ENCODE measurements at regions of chr4 and their contacts with region 1.

Region 1: DNA sequence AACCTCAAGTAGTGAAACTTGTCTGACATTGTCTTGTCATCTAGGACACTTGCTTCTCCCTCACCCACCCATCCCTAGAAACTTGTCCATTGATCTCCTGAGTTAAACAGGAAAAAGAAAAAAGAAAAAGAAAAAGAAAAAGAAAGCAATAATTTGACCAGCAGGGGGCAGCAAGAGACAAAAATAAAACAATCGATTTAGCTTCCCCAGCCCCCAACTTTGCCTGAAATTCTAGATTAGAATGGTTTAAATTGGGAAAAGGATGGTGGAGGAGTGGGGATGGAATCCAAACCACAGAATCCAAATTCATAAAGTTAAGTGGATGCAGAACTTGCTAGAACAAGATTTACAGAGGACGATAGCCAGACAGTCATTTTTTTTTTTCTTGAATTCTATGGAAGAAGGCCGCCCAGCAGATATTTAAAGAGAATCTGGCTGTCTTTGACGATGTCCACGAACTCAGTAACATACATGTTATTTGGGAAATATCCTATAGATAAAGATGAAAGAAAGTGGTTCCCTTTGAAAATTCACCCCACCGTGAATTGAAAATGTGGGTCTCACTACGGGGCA is 282.9 kb downstream of the USP46 start:
- DNase-seq: no peak
- ATAC-seq: peak; percentile 24; the same call in 1 of the 3 replicates
- H3K4me3 ChIP-seq: no peak overlapping the region
- H3K27ac ChIP-seq: no peak overlapping the region
- H3K4me1 ChIP-seq: no peaks in the 10 kb centered on the region
- H3K27me3 ChIP-seq: no peaks in the 10 kb centered on the region
- CTCF ChIP-seq: peak; percentile 20 to 53 (median 41); a peak in 4 of 6 replicates
- EP300 ChIP-seq: no peak
- POLR2A ChIP-seq: no peak
- RAD21 ChIP-seq: peak; percentile 68

Region 2: DNA sequence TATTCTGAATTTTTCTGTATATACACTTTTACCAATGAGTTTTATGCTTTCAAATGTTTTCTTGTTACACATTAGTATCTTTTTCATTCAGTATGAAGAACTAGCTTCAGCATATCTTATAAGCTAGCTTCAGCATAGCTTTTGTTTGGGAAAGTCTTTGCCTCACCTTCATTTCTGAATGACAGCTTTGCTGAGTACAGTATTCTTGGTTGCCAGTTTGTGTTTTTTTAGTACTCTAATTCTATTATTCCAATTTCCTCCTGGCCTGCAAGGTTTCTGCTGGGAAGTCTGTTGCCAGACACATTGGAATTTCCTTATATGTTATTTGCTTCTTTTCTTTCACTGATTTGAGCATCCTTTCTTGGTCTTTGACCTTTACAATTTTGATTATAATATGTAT is 46.3 kb before region 1 on chr4:
- CTCF ChIA-PET with region 1: no interaction called
- POLR2A ChIA-PET with region 1: no interaction called
- RAD21 ChIA-PET with region 1: no interaction called
- SMC1A ChIA-PET with region 1: no interaction called
- in situ Hi-C with region 1: no loop called
- intact Hi-C with region 1: no loop called
- DNase-seq: no peak
- ATAC-seq: no peak
- H3K4me3 ChIP-seq: no peak overlapping the region
- H3K27ac ChIP-seq: no peak overlapping the region
- H3K4me1 ChIP-seq: no peaks in the 10 kb centered on the region
- H3K27me3 ChIP-seq: no peaks in the 10 kb centered on the region
- CTCF ChIP-seq: no peak
- EP300 ChIP-seq: no peak
- POLR2A ChIP-seq: no peak
- RAD21 ChIP-seq: no peak

Region 3: DNA sequence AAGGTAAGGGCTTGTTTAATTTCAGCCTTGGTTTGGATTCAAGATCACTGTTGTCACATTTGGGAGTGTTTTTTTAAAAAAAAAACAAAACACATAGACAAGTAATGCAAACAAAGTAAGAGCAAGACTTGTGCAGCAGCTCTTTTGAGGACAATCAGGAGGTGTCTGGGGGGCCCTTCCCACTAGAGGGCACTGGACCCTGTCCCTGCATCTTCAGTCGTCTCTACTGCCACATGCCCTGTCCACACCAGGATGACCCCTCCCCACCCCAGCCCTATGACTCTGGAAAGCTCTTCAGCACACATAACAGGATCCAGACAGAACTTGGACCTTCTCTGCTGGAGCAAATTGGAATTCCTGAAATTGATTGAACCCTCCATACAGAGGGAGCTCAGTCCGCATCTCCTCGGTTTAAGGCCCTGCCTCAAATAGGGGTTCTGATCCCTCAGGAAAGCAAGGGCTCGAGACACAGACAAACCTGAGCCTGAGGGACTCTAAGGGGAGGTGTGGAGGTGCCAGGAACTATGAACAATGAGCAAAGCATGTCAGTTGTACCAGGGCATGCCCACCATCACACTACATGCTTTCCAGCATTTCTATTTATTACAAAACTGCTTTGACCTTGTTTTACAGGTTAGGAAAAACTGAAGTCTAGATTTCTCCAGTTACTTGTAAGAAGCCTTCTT is 212.0 kb after region 1 on chr4:
- CTCF ChIA-PET with region 1: interaction called, 4 read pairs
- POLR2A ChIA-PET with region 1: no interaction called
- RAD21 ChIA-PET with region 1: interaction called, 3 read pairs
- SMC1A ChIA-PET with region 1: no interaction called
- in situ Hi-C with region 1: no loop called
- intact Hi-C with region 1: loop called (anchors 10 kb)
- DNase-seq: no peak
- ATAC-seq: peak; percentile 92
- H3K4me3 ChIP-seq: no peak overlapping the region
- H3K27ac ChIP-seq: no peak overlapping the region
- H3K4me1 ChIP-seq: no peaks in the 10 kb centered on the region
- H3K27me3 ChIP-seq: no peaks in the 10 kb centered on the region
- CTCF ChIP-seq: peak; percentile 54 to 69 (median 56)
- EP300 ChIP-seq: no peak
- POLR2A ChIP-seq: no peak
- RAD21 ChIP-seq: peak; percentile 68

Region 4: GRCh38 chr4:52665592-52665991 is 289.4 kb after region 1 on chr4:
- CTCF ChIA-PET with region 1: interaction called, 17 read pairs
- POLR2A ChIA-PET with region 1: no interaction called
- RAD21 ChIA-PET with region 1: interaction called, 12 read pairs
- SMC1A ChIA-PET with region 1: interaction called, 5 read pairs
- in situ Hi-C with region 1: loop called (anchors 5 kb)
- intact Hi-C with region 1: loop called (anchors 1 kb)
- DNase-seq: no peak
- ATAC-seq: peak; percentile 94
- H3K4me3 ChIP-seq: no peak overlapping the region
- H3K27ac ChIP-seq: no peak overlapping the region
- H3K4me1 ChIP-seq: 0 out of 2 replicates have a peak, but pooled peaks cover 2% of the 10 kb centered on the region
- H3K27me3 ChIP-seq: no peaks in the 10 kb centered on the region
- CTCF ChIP-seq: peak; percentile 50 to 76 (median 52); a peak in 5 of 6 replicates
- EP300 ChIP-seq: no peak
- POLR2A ChIP-seq: no peak
- RAD21 ChIP-seq: peak; percentile 87

Region 5: DNA sequence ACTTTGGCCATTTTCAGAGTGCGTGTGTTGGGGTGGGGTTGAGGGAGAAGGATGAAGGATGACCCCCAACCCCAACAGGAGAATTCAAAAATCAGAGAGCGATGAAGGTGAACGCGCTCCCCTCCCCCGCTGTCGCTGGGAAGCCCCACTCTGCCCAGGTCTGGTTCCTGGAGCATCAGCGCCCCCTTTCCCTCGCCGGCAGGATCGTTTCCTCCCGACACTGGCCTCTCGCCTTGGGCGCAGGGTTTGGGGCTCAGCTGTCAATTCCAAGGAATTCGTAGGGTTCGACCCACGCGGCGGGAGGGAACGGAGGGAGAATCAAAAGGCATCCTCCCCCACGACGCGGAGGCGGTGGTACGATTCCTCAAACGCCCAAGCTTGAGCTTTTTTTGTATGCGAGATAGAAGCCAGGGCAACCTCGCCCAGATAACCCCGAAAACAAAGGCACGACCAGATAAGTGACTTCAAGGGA is 1851.9 kb after region 1 on chr4:
- CTCF ChIA-PET with region 1: no interaction called
- POLR2A ChIA-PET with region 1: no interaction called
- RAD21 ChIA-PET with region 1: interaction called, 10 read pairs
- SMC1A ChIA-PET with region 1: interaction called, 3 read pairs
- in situ Hi-C with region 1: loop called (anchors 5 kb)
- intact Hi-C with region 1: loop called (anchors 5 kb)
- DNase-seq: no peak
- ATAC-seq: peak; percentile 76
- H3K4me3 ChIP-seq: peak overlapping the region; percentile 54; the same call in 1 of the 2 replicates
- H3K27ac ChIP-seq: no peak overlapping the region
- H3K4me1 ChIP-seq: peaks cover 3% of the 10 kb centered on the region; the same call in 1 of the 2 replicates
- H3K27me3 ChIP-seq: peaks cover 31 to 32% of the 10 kb centered on the region in 2 experiments
- CTCF ChIP-seq: peak; percentile 64 to 83 (median 73)
- EP300 ChIP-seq: no peak; a peak in 1 of 4 replicates
- POLR2A ChIP-seq: no peak
- RAD21 ChIP-seq: peak; percentile 60